Heart right ventricle (tissue), 16 donors: ENCODE measurements at regions of chr7 and their contacts with region 1.

Region 1: GRCh38 chr7:156356556-156356955 is 284.0 kb upstream of the RNF32 start:
- DNase-seq: no peak
- ATAC-seq: no peak
- H3K4me3 ChIP-seq: no peak overlapping the region
- H3K27ac ChIP-seq: no peak overlapping the region
- H3K4me1 ChIP-seq: no peaks in the 10 kb centered on the region
- H3K27me3 ChIP-seq: peaks cover 0 to 30% (median 0%) of the 10 kb centered on the region in 7 donors
- CTCF ChIP-seq: no peak

Region 2: DNA sequence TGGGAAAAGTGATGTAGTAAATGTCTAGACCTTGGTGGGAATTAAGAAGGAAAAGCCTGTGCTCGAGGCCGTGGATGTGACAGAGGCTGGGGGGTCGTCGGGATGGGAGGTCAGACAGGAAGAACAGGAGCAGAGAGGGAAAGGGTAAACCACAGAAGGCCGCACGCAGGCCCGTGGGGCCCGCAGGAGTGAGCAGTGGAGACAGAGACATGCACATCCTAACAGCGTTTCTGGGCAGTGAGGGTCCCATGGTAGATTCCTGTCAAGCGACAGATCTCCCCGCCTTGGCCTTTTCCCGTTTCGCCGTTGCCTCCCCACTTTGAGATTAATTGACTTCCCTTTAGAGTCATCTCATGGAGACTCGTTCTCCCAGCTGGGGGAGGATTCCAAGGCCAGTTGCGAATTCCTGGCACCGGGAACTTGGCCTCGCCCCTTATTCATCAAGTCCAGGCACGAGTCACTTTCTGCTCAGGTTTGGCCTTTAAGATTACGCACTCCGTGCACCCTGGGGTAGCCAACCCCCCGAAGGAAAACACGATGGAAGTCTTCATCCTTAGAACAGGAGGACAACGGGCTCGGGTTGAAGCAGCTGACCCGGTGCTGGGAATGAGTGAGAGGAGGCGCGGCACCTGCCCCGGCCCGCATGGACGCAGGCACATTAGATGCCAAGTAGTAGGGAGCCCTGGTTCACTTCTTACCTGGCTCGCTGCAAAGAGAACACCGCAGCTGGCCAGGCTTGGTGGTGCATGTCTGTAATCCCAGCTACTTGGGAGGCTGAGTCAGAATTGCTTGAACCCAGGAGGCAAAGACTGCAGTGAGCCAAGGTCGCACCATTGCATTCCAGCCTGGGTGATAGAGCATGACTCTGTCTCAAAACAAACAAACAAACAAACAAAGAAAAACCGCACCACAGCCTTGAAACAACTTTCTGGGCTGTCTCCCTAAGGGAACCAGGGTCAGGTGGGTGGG is 229.1 kb before region 1 on chr7:
- intact Hi-C with region 1: no loop called
- DNase-seq: no peak
- ATAC-seq: no peak
- H3K4me3 ChIP-seq: no peak overlapping the region
- H3K27ac ChIP-seq: no peak overlapping the region
- H3K4me1 ChIP-seq: no peaks in the 10 kb centered on the region
- H3K27me3 ChIP-seq: peaks cover 0 to 3% (median 0%) of the 10 kb centered on the region in 7 donors
- CTCF ChIP-seq: no peak

Region 3: DNA sequence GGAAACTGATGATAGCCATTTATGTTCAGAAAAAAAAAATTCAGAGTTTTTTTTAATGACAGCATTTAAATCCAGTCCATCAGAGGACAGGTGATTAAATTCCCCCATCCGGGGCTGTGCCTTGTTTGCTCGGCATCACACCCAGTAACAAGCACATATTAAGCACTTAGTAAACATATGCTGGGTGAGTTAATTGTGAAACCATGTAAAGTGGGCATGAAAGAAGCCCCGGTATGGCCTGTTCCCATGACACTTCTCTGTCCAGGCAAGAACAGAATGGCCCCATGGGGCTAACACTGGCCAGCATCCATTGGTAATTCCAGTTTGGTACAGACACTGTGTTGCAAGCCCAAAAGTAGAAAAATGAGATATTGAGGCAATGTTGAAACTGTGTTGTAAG is 63.2 kb after region 1 on chr7:
- intact Hi-C with region 1: loop called in 1 of 10 experiments (anchors 10 kb)
- DNase-seq: no peak
- ATAC-seq: no peak
- H3K4me3 ChIP-seq: no peak overlapping the region
- H3K27ac ChIP-seq: no peak overlapping the region
- H3K4me1 ChIP-seq: no peaks in the 10 kb centered on the region
- H3K27me3 ChIP-seq: peaks cover 0 to 15% (median 0%) of the 10 kb centered on the region in 7 donors
- CTCF ChIP-seq: no peak

Region 4: GRCh38 chr7:156435486-156436231 is 79.1 kb after region 1 on chr7:
- intact Hi-C with region 1: no loop called
- DNase-seq: no peak
- ATAC-seq: no peak
- H3K4me3 ChIP-seq: no peak overlapping the region
- H3K27ac ChIP-seq: no peak overlapping the region
- H3K4me1 ChIP-seq: no peaks in the 10 kb centered on the region
- H3K27me3 ChIP-seq: peaks cover 0 to 24% (median 6%) of the 10 kb centered on the region in 7 donors
- CTCF ChIP-seq: no peak

Region 5: DNA sequence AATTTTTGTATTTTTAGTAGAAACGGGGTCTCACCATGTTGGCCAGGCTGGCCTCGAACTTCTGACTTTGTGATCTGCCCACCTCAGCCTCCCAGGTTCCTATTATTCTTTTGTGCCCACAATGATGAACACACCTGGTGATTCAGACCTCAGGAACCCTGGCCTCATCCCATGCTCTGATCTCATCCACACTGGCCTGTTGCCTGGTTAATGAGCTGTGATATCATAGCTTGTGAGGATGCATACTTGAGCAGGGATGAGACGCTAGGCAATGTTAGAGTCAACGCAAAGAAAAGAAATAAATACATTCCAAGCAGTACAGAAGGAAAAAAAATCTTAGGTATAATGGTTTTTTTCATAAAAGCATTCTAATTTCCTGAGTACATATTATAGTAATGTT is 201.6 kb after region 1 on chr7:
- intact Hi-C with region 1: no loop called
- DNase-seq: no peak
- ATAC-seq: no peak
- H3K4me3 ChIP-seq: no peak overlapping the region
- H3K27ac ChIP-seq: no peak overlapping the region
- H3K4me1 ChIP-seq: no peaks in the 10 kb centered on the region
- H3K27me3 ChIP-seq: peaks cover 0 to 6% (median 0%) of the 10 kb centered on the region in 7 donors
- CTCF ChIP-seq: no peak